Activated CD8-positive, alpha-beta T cell treated with anti-CD3 and anti-CD28 coated beads, Interleukin-2, amount 10 ng/mL, durations not matched to agents 7 days and 5 days (primary cell): ENCODE measurements at regions of chr17 and their contacts with region 1.

Region 1: GRCh38 chr17:77140166-77140878 is 447 bp upstream of the SEC14L1 start:
- DNase-seq: peak; percentile 100
- ATAC-seq: peak; percentile 91
- H3K4me3 Mint-ChIP-seq: peak overlapping the region; percentile 74
- H3K27ac Mint-ChIP-seq: peak overlapping the region; percentile 86
- H3K4me1 Mint-ChIP-seq: peaks cover 69% of the 10 kb centered on the region
- H3K27me3 Mint-ChIP-seq: no peaks in the 10 kb centered on the region

Region 2: GRCh38 chr17:76994237-76994637 is 146.1 kb before region 1 on chr17:
- CTCF ChIA-PET with region 1: no interaction called
- POLR2A ChIA-PET with region 1: no interaction called
- DNase-seq: no peak
- ATAC-seq: no peak
- H3K4me3 Mint-ChIP-seq: no peak overlapping the region
- H3K27ac Mint-ChIP-seq: no peak overlapping the region
- H3K4me1 Mint-ChIP-seq: peaks cover 53% of the 10 kb centered on the region
- H3K27me3 Mint-ChIP-seq: no peaks in the 10 kb centered on the region

Region 3: GRCh38 chr17:77088455-77089123 is 51.7 kb before region 1 on chr17:
- CTCF ChIA-PET with region 1: interaction called, 7 read pairs
- POLR2A ChIA-PET with region 1: interaction called, 18 read pairs
- DNase-seq: peak; percentile 94
- ATAC-seq: peak; percentile 92
- H3K4me3 Mint-ChIP-seq: peak overlapping the region; percentile 91
- H3K27ac Mint-ChIP-seq: peak overlapping the region; percentile 97
- H3K4me1 Mint-ChIP-seq: peaks cover 62% of the 10 kb centered on the region
- H3K27me3 Mint-ChIP-seq: no peaks in the 10 kb centered on the region

Region 4: DNA sequence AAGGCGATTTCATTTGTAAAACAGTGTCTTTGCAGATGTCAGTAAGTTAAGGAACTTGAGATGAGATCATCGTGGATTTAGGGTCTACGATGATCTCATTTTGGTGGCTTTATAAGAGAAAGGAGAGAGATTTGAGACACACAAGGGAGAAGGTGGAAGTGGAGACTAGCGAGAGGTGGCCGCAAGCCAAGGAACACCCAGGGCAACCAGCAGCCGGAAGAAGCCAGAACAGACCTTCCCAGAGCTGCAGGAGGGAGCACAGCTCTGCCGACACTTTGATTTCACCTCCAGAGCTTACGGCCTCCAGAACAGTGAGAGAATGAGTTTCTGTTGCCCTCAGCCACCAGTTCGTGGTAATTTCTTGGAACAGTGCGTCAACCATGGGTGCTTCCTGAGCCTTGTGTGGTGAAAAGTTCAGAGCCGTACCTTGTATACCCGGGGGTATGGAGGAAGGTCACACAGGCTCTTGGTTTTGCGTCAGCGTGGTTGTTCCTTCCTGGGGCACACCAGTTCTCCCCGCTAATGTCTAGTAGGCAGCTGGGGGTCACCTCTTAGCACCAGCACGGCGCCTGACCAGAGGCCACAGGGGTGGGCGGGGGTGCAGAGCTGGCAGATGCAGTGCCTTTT is 12.5 kb before region 1 on chr17:
- CTCF ChIA-PET with region 1: interaction called, 32 read pairs
- POLR2A ChIA-PET with region 1: interaction called, 45 read pairs
- DNase-seq: peak; percentile 92
- ATAC-seq: peak; percentile 92
- H3K4me3 Mint-ChIP-seq: peak overlapping the region; percentile 66
- H3K27ac Mint-ChIP-seq: peak overlapping the region; percentile 98
- H3K4me1 Mint-ChIP-seq: peaks cover 63% of the 10 kb centered on the region
- H3K27me3 Mint-ChIP-seq: no peaks in the 10 kb centered on the region

Region 5: DNA sequence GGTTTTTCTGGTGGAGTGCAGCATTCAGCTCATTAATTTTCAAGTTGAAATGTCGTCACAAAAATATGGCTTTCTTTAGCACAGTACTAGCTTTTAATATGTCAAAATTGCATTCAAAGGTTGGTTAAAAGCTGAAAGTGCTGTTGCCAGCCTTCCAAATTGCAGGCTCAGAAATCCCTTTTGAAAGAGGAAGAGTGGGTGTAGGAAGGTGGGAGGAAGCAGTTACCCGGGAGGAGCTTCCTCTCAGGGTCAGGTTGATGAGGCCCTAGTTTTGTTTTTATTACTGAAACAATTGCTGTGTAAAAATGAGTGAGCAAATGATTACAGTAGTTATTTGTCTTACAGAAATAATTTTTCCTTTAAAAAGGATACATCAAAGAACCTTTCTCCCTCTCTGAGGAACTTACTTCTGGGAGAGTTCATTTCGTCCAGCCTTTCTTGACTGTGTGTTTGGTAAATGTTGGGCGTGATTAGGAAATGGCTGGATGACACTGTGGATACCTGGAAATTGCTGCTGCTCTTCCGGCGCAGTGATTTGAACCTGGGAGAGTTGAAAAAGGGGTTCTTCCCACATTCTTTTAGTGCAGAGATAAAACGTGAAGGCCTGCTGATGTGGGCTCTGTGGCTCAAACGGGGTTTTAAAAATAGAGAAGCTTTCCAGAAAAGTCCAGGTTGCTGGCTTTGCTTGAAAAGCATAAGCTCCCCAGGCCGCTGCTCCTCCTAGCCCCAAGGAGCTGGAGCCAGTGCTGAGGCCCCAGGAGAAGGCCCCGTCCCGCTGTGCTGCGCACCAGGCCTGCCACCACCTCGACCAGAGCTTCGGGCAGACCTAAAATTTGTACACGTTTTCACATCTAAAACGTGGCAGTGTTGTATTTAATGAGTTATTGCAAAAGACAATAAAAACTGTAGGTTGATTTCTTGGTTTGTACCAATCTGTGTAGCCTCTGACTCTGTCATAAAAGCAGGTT is 42.2 kb after region 1 on chr17:
- CTCF ChIA-PET with region 1: interaction called, 7 read pairs
- POLR2A ChIA-PET with region 1: interaction called, 17 read pairs
- DNase-seq: no peak
- ATAC-seq: no peak
- H3K4me3 Mint-ChIP-seq: peak overlapping the region; percentile 46
- H3K27ac Mint-ChIP-seq: peak overlapping the region; percentile 85
- H3K4me1 Mint-ChIP-seq: peaks cover 47% of the 10 kb centered on the region
- H3K27me3 Mint-ChIP-seq: no peaks in the 10 kb centered on the region